K562 (cell line): ENCODE measurements at regions of chr2 and their contacts with region 1.

Region 1: GRCh38 chr2:20661067-20661980 is 5.6 kb upstream of the GDF7 start:
- DNase-seq: peak; percentile 74 to 83 (median 76)
- ATAC-seq: peak; percentile 90
- H3K4me3 ChIP-seq: no peak overlapping the region
- H3K27ac ChIP-seq: no peak overlapping the region
- H3K4me1 ChIP-seq: peaks cover 0 to 10% of the 10 kb centered on the region in 2 experiments; a peak in 2 of 5 replicates
- H3K27me3 ChIP-seq: peaks cover 31 to 62% of the 10 kb centered on the region in 2 experiments
- CTCF ChIP-seq: peak; percentile 90 to 96 (median 93)
- EP300 ChIP-seq: no peak
- POLR2A ChIP-seq: no peak
- RAD21 ChIP-seq: peak; percentile 90 to 97

Region 2: GRCh38 chr2:20781656-20782265 is 120.4 kb after region 1 on chr2:
- CTCF ChIA-PET with region 1: no interaction called
- POLR2A ChIA-PET with region 1: no interaction called
- in situ Hi-C with region 1: no loop called
- intact Hi-C with region 1: loop called (anchors 10 kb)
- DNase-seq: peak; percentile 12 to 30 (median 26)
- ATAC-seq: peak; percentile 85
- H3K4me3 ChIP-seq: no peak overlapping the region
- H3K27ac ChIP-seq: no peak overlapping the region
- H3K4me1 ChIP-seq: no peaks in the 10 kb centered on the region; a peak in 1 of 5 replicates
- H3K27me3 ChIP-seq: no peaks in the 10 kb centered on the region
- CTCF ChIP-seq: peak; percentile 56 to 75 (median 69); a peak in 5 of 6 replicates
- EP300 ChIP-seq: no peak
- POLR2A ChIP-seq: no peak
- RAD21 ChIP-seq: peak; percentile 52 to 62

Region 3: GRCh38 chr2:20962939-20963557 is 301.7 kb after region 1 on chr2:
- CTCF ChIA-PET with region 1: interaction called, 17 read pairs
- POLR2A ChIA-PET with region 1: interaction called, 3 read pairs
- in situ Hi-C with region 1: loop called (anchors 5 kb)
- intact Hi-C with region 1: loop called (anchors 1 kb)
- DNase-seq: peak; percentile 49 to 72 (median 66)
- ATAC-seq: peak; percentile 89
- H3K4me3 ChIP-seq: no peak overlapping the region
- H3K27ac ChIP-seq: no peak overlapping the region
- H3K4me1 ChIP-seq: no peaks in the 10 kb centered on the region
- H3K27me3 ChIP-seq: peaks cover 0 to 20% of the 10 kb centered on the region in 2 experiments; a peak in 3 of 5 replicates
- CTCF ChIP-seq: peak; percentile 76 to 80 (median 77)
- EP300 ChIP-seq: no peak
- POLR2A ChIP-seq: no peak
- RAD21 ChIP-seq: peak; percentile 68 to 86

Region 4: DNA sequence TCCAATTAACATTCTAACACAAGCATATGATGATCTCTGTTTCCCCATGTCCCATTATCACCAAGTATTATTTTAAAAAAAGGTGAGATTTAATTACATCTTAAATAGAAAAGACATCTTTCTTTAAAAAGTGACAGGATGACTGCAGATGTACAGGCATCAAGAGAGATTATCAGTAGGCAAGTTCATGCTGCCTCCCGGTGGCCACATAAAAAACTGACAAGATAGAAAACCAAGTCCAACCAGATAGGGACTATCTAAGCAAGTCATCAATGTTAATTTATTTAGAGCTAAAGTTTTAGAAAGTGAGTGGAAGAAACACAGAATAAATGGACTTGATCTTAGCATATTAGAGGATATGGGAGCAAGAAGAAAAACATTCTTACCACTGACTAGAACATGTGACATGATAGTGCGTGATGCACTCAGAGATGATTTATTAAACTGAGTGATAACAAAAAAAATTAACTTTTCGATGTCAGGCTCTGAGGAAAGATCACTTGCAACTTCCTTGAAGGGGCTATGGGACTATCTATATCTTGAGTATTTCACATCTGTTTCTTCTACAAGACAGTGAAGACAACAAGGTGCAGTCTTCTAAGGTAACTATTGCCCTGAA is 457.1 kb after region 1 on chr2:
- CTCF ChIA-PET with region 1: no interaction called
- POLR2A ChIA-PET with region 1: no interaction called
- in situ Hi-C with region 1: no loop called
- intact Hi-C with region 1: loop called (anchors 5 kb)
- DNase-seq: peak; percentile 8 to 33 (median 21)
- ATAC-seq: 0 out of 3 replicates have a peak, but pooled peaks have one; percentile 49
- H3K4me3 ChIP-seq: no peak overlapping the region
- H3K27ac ChIP-seq: no peak overlapping the region
- H3K4me1 ChIP-seq: no peaks in the 10 kb centered on the region
- H3K27me3 ChIP-seq: no peaks in the 10 kb centered on the region
- CTCF ChIP-seq: peak in 2 of 3 experiments; percentile 40 to 47; a peak in 3 of 6 replicates
- EP300 ChIP-seq: no peak
- POLR2A ChIP-seq: no peak
- RAD21 ChIP-seq: peak; percentile 73 to 84

Region 5: DNA sequence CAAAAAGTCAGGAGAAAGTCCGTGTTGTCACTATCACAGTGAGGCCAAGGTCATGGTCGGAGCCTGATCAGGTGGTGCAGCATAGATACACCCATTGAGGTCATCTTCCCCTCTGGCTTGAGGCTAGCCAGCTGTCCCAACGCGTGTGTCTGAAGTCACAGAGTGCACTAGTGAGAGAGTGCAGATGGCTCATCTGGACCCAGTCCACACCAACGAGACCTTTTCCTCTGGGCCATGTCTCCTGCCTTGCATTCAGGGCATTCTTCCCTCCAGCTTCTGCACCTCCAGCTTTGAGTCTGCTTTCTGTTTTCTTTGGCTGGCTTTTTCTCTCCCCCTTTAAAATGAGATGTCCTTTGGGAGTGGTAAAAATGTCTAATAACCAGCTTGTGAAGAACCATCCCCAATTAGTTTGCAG is 609.4 kb after region 1 on chr2:
- CTCF ChIA-PET with region 1: no interaction called
- POLR2A ChIA-PET with region 1: no interaction called
- in situ Hi-C with region 1: loop called (anchors 25 kb)
- intact Hi-C with region 1: loop called (anchors 10 kb)
- DNase-seq: no peak
- ATAC-seq: peak; percentile 50
- H3K4me3 ChIP-seq: no peak overlapping the region
- H3K27ac ChIP-seq: no peak overlapping the region
- H3K4me1 ChIP-seq: no peaks in the 10 kb centered on the region; a peak in 1 of 5 replicates
- H3K27me3 ChIP-seq: no peaks in the 10 kb centered on the region; a peak in 1 of 5 replicates
- CTCF ChIP-seq: no peak
- EP300 ChIP-seq: no peak
- POLR2A ChIP-seq: no peak
- RAD21 ChIP-seq: no peak